Activated CD8-positive, alpha-beta T cell treated with anti-CD3 and anti-CD28 coated beads, Interleukin-2, amount 10 ng/mL, durations not matched to agents 7 days and 5 days (primary cell): ENCODE measurements at regions of chr7 and their contacts with region 1.

Region 1: GRCh38 chr7:27179503-27180430 is 5.3 kb downstream of the HOXA11 start:
- DNase-seq: peak; percentile 62
- ATAC-seq: peak; percentile 59
- H3K4me3 Mint-ChIP-seq: no peak overlapping the region
- H3K27ac Mint-ChIP-seq: no peak overlapping the region
- H3K4me1 Mint-ChIP-seq: peaks cover 15% of the 10 kb centered on the region
- H3K27me3 Mint-ChIP-seq: peaks cover 63% of the 10 kb centered on the region

Region 2: DNA sequence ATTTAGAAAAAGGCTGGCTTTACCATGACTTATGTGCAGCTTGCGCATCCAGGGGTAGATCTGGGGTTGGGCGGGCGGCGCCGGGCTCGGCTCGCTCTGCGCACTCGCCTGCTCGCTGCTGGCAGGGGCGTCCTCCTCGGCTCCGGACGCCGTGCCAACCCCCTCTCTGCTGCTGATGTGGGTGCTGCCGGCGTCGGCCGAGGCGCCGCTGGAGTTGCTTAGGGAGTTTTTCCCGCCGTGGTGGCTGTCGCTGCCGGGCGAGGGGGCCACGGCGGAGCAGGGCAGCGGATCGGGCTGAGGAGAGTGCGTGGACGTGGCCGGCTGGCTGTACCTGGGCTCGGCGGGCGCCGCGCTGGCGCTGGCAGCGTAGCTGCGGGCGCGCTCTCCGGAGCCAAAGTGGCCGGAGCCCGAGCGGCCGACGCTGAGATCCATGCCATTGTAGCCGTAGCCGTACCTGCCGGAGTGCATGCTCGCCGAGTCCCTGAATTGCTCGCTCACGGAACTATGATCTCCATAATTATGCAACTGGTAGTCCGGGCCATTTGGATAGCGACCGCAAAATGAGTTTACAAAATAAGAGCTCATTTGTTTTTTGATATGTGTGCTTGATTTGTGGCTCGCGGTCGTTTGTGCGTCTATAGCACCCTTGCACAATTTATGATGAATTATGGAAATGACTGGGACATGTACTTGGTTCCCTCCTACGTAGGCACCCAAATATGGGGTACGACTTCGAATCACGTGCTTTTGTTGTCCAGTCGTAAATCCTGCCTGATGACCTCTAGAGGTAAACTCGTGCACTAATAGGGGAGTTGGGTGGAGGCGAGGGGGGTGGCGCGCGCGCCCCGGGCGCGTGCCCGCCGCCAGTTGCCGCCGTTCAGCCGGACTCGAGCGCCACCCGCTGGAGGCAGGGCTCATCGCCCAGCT is 36.5 kb before region 1 on chr7 and contains the start of gene HOXA5:
- CTCF ChIA-PET with region 1: no interaction called
- POLR2A ChIA-PET with region 1: no interaction called
- DNase-seq: no peak
- ATAC-seq: no peak
- H3K4me3 Mint-ChIP-seq: no peak within 1 kb of the TSS
- H3K27ac Mint-ChIP-seq: no peak within 1 kb of the TSS
- H3K4me1 Mint-ChIP-seq: peaks cover 3% of the 10 kb centered on the region
- H3K27me3 Mint-ChIP-seq: peaks cover 34% of the 10 kb centered on the region
- total RNA-seq, gene HOXA5: not detected

Region 3: GRCh38 chr7:27160546-27161213 is 19.1 kb before region 1 on chr7:
- CTCF ChIA-PET with region 1: interaction called, 13 read pairs
- POLR2A ChIA-PET with region 1: no interaction called
- DNase-seq: peak; percentile 85
- ATAC-seq: peak; percentile 74
- H3K4me3 Mint-ChIP-seq: peak overlapping the region; percentile 65
- H3K27ac Mint-ChIP-seq: no peak overlapping the region
- H3K4me1 Mint-ChIP-seq: peaks cover 17% of the 10 kb centered on the region
- H3K27me3 Mint-ChIP-seq: peaks cover 77% of the 10 kb centered on the region

Region 4: DNA sequence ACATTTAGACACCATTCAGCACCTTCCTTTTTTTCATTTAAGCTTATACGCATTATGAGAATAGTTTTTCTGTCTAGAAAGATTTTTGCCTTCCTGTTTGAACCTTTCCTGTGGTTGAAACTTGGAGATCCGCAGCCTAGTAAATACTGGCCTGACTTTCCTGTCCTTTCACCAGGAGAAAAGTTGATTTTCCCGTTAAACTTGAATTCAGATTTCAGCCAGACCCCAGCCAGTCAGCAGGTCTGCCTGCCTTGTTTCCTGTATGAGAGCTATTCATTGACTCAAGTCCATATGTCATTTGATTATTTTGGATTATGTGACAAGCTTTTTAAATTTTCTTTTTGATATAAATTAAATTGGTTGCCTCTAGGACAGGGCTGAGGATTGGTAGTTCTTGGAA is 134.3 kb after region 1 on chr7:
- CTCF ChIA-PET with region 1: no interaction called
- POLR2A ChIA-PET with region 1: no interaction called
- DNase-seq: no peak
- ATAC-seq: no peak
- H3K4me3 Mint-ChIP-seq: no peak overlapping the region
- H3K27ac Mint-ChIP-seq: no peak overlapping the region
- H3K4me1 Mint-ChIP-seq: no peaks in the 10 kb centered on the region
- H3K27me3 Mint-ChIP-seq: peaks cover 17% of the 10 kb centered on the region